Psoas muscle (tissue), 8 donors: ENCODE measurements at regions of chr9 and their contacts with region 1.

Region 1: DNA sequence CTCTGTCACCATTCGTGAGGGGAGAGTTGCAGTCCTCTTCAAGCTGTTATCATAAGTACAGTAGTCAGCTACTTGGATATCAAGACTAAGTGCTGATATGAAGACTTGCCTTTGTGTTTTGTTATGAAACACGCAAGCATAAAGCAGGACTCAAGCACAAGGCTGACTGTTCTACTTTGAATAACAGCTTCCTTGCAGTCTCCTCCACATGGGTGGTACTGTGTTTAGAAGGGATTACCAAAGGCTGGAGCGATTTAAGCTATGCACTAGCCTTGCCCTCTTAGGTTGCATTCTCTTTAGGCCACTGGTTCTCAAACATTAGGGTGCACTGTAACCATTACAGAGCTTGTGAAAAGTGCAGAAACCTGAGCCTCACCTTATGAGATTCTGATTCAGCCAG is 41.4 kb downstream of the SLC25A51 start:
- DNase-seq: no peak
- ATAC-seq: no peak
- H3K4me3 ChIP-seq: no peak overlapping the region
- H3K27ac ChIP-seq: no peak overlapping the region
- H3K4me1 ChIP-seq: no peaks in the 10 kb centered on the region
- H3K27me3 ChIP-seq: no peaks in the 10 kb centered on the region
- CTCF ChIP-seq: no peak

Region 2: GRCh38 chr9:37812773-37813379 is 49.7 kb before region 1 on chr9:
- intact Hi-C with region 1: loop called in 1 of 2 experiments (anchors 5 kb)
- DNase-seq: no peak
- ATAC-seq: no peak
- H3K4me3 ChIP-seq: no peak overlapping the region
- H3K27ac ChIP-seq: no peak overlapping the region
- H3K4me1 ChIP-seq: no peaks in the 10 kb centered on the region
- H3K27me3 ChIP-seq: no peaks in the 10 kb centered on the region
- CTCF ChIP-seq: no peak

Region 3: GRCh38 chr9:37903647-37904444 is 41.3 kb after region 1 on chr9 and contains the start of gene SLC25A51:
- intact Hi-C with region 1: loop called in 1 of 2 experiments (anchors 5 kb)
- DNase-seq: peak; percentile 96
- ATAC-seq: peak; percentile 93 to 96 (median 94)
- H3K4me3 ChIP-seq: peak within 1 kb of the TSS; percentile 96
- H3K27ac ChIP-seq: peak within 1 kb of the TSS; percentile 78
- H3K4me1 ChIP-seq: peaks cover 21% of the 10 kb centered on the region
- H3K27me3 ChIP-seq: no peaks in the 10 kb centered on the region
- CTCF ChIP-seq: peak; percentile 91
- total RNA-seq, gene SLC25A51: 16.3 to 25.3 (median 18.4) TPM